ENCODE measurements at regions of chr2 and their contacts with region 1.

Region 1: DNA sequence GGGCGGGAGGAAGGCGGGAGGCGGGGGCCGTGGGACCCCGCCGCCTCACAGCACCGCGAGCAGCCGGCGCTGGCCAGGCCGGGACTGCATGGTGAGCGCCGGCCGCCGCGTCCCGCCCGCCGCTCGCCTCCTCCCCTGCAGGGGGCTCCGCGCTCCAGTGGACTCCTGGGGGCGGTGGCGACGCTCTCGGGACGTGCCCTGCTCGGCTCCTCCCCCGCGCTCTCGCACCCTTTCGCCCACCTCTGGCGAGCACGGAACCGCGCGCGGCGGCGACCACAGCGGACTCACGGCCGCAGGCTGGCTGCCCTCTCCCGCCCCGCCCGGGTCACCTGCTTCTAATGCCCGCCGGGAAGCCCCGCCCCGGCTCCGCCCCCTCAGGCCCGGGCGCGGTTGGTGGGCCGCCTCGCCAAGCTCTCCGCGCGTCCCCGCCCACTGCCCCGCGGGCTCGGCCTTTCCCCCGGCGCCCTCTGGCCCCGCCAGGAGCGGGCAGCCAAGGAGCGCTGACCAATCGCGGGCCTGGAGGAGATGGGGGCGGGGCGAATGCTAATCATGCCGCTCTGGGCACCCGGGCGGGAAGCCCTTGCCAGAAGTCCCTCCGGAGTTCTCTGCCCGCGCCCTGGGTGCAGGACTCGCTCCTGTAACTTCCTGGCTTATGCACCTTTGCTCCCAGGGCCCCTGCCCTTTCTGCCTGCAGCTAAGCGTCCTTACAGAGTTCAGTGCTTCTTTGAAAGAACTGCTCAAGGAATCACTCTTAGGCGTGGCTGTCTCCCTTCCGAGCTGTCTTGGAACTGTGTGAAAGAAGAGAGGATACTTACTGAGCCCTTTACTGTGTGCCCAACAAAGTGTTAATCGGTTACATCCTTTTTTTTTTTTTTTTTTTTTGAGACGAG is at the start of gene FZD5:
- ATAC-seq: peak; percentile 65 to 88 (median 87)
- H3K4me3 ChIP-seq: peak within 1 kb of the TSS; percentile 55 to 73 (median 63)
- H3K27ac ChIP-seq: peak within 1 kb of the TSS in 1 of 2 donors; percentile 8
- H3K4me1 ChIP-seq: peaks cover 5 to 17% of the 10 kb centered on the region in 2 donors
- total RNA-seq, gene FZD5: 2.1 to 179 (median 4.0) TPM

Region 2: DNA sequence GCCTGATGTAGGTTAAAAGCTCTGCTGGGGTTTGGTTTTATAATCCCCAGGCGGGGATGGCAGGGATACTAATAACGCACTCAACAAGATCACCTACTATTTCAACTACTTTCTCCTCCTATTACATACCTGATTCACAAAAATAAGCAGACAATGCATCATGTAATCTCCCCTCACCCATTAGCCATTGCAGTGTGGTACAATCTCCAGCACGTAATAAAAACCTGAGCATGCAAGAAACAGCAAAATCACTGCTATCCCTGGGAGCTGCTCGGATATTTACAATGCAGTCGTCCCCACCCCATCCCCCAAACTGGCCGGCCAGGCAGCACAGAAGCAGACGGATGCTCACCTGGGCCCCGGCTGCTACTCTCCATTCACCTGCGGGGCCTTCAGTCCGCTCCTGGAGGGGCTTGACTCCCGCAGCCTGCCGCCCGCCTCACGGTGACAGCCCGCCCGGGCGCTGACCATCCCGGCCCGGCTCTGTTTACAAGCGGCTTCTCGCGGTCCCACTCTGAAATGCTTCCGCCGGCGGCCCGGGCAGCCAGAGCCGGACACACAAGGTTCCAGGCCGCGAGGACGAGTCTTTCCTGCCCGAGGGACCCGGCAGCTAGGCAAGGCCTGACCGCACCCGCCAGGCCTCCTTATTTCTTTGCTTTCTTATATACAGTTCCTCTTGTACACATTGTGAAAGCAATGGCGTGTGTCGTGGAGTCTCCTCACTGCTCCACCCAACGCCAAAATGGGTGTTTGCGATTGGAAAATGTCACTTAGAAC is 255.4 kb after region 1 on chr2 and contains the start of gene PLEKHM3:
- in situ Hi-C with region 1: loop called in 4 of 9 experiments (anchors 25 kb)
- ATAC-seq: peak; percentile 97 to 99 (median 98)
- H3K4me3 ChIP-seq: peak within 1 kb of the TSS; percentile 64 to 99 (median 88)
- H3K27ac ChIP-seq: peak within 1 kb of the TSS; percentile 72 to 77
- H3K4me1 ChIP-seq: peaks cover 4 to 9% of the 10 kb centered on the region in 2 donors
- total RNA-seq, gene PLEKHM3: 8.6 to 20.5 (median 12.5) TPM

Measured in motor neuron (in vitro differentiated cells).